Activated CD4-positive, alpha-beta T cell treated with anti-CD3 and anti-CD28 coated beads for 36 hours (primary cell): ENCODE measurements at regions of chr6 and their contacts with region 1.

Region 1: GRCh38 chr6:28252009-28252975 is at the start of gene ZKSCAN4:
- DNase-seq: peak; percentile 85
- ATAC-seq: peak; percentile 83
- H3K4me3 Mint-ChIP-seq: peak within 1 kb of the TSS; percentile 99
- H3K27ac Mint-ChIP-seq: peak within 1 kb of the TSS; percentile 96
- H3K4me1 Mint-ChIP-seq: peaks cover 14% of the 10 kb centered on the region
- H3K27me3 Mint-ChIP-seq: peaks cover 1% of the 10 kb centered on the region
- total RNA-seq, gene ZKSCAN4: 3.2 to 4.1 TPM

Region 2: DNA sequence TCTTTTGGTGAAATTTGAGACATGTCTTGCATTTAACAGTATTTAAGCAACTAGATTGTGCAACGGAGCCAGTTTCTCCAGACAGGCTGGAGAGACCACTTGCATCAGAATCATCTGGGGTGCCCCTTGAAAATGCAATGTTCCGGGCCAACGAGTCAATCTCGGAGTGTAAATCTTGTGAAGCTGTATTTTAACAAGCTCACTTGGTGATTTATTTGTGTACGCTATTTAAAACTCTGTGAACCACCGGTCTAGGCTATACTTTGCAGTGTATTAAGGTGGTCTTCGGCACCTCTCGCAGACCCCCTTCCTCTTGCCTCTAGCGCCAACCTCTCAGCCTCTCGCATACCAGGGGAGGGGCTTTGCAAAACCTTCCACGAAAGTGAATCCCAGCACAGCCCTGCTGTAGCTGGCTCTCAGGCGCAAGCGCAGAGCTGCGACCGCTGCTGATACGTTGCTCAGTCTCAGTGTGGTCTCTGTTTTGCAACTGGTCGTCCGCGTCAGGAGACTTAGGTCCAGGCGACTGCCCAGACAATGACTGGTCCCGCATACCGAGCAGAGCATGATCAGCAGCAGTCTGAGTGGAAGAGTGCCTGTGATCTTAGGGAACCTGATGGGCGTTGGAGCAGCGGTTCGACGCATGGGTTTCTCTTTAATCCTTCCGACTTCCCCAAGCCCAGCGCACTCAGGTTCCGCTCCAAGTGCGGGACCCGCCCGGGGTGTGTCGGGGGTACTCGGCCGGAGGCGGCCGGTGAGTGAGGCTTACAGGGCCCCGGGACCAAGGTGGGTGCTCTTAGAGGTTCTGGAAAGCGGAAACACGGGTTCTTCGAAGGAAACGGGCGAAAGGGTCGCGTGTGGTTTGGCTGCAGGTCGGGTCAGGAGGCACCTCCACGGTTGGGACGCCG is 863.7 kb before region 1 on chr6 and contains the start of gene ZNF391:
- CTCF ChIA-PET with region 1: no interaction called
- POLR2A ChIA-PET with region 1: no interaction called
- intact Hi-C with region 1: loop called in 1 of 2 experiments (anchors 10 kb)
- DNase-seq: peak; percentile 81
- ATAC-seq: peak; percentile 95
- H3K4me3 Mint-ChIP-seq: peak within 1 kb of the TSS; percentile 95
- H3K27ac Mint-ChIP-seq: peak within 1 kb of the TSS; percentile 93
- H3K4me1 Mint-ChIP-seq: peaks cover 14% of the 10 kb centered on the region
- H3K27me3 Mint-ChIP-seq: peaks cover 6% of the 10 kb centered on the region
- total RNA-seq, gene ZNF391: 4.3 to 6.2 TPM

Region 3: DNA sequence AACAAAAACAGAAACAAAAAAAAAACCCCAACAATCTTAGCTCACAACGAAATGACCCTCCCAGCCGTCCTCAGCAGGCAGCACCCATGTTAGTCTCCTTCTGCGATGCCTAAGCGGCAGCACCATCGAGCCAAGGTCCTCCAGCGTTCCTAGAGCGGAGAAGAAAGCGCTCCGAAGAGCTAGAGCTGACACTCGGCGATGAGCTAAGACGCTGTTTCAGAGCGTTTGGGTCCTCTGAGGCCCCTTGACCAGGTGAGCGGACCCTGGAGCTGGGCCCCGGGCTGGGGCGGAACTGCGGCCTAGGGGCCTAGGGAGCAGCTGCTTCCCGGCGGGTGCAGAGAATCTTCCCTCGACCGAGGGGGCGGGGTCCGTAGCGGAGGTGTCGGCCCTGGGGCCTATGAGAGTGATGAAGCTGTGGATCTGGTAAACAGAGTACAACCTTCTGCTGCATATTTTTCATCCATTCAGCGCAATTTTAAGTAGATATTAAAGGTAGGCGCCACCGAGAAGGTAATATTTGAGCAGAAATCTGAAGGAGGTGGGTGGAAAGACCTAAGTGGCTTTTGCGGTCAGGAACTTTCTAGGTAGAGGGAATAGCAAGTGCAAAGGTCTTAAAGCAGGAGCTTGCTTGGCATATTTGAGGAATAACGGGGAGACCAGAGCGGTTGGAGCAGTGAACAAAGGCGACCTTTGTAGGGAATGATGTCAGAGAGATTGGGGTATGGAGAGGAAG is 14.8 kb after region 1 on chr6 and contains the start of gene ZSCAN26:
- CTCF ChIA-PET with region 1: interaction called, 12 read pairs
- POLR2A ChIA-PET with region 1: interaction called, 19 read pairs
- intact Hi-C with region 1: loop called (anchors 1 kb)
- DNase-seq: peak; percentile 91
- ATAC-seq: peak; percentile 90
- H3K4me3 Mint-ChIP-seq: no peak within 1 kb of the TSS
- H3K27ac Mint-ChIP-seq: no peak within 1 kb of the TSS
- H3K4me1 Mint-ChIP-seq: peaks cover 32% of the 10 kb centered on the region
- H3K27me3 Mint-ChIP-seq: no peaks in the 10 kb centered on the region
- total RNA-seq, gene ZSCAN26: 5.0 to 6.7 TPM

Region 4: GRCh38 chr6:28281288-28282064 is 29.2 kb after region 1 on chr6 and contains the start of gene PGBD1:
- CTCF ChIA-PET with region 1: no interaction called
- POLR2A ChIA-PET with region 1: no interaction called
- intact Hi-C with region 1: loop called in 1 of 2 experiments (anchors 1 kb)
- DNase-seq: peak; percentile 74
- ATAC-seq: peak; percentile 87
- H3K4me3 Mint-ChIP-seq: peak within 1 kb of the TSS; percentile 76
- H3K27ac Mint-ChIP-seq: no peak within 1 kb of the TSS
- H3K4me1 Mint-ChIP-seq: peaks cover 9% of the 10 kb centered on the region
- H3K27me3 Mint-ChIP-seq: peaks cover 18% of the 10 kb centered on the region
- total RNA-seq, gene PGBD1: 1.5 to 1.6 TPM

Region 5: DNA sequence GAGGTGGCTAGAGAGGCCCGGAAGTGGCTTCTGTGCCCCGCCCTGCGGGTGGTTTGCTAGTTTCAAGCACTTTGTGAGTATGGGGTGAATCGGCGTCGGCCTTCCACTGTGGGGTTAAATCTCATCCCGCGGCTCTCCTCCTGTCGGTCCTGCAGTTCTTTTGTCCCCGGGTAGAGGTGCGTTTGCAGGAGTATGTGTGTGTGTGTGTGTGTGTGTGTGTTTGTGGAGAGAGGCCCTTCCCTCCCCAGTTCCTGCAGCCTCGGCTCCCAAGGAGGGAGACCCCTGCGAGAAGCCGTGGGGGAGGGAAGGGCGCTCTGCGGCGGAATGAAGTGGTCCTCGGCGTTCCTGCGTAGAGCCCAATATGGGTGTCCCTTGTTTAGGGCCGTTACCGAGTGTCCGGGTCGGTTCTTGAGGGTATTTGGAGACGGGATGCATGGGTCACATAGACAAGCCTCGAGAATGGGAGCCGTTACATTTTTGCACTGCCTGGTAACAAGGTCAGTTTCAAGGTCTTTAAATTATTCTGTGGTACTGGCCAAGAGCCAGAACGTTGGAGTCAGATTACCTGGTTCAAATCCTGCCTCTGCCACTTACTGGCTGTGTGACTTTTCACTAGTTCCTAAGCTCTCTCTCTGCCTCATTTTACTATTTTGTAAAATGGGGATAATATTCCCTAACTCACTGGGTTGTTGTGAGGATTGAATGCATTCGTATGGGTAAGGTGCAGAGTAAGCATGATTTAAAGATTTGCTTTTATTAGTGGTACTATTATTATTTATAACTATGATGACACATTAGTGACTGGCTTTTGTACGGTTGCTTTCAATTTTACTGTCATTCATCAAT is 97.8 kb after region 1 on chr6 and contains the start of gene ZKSCAN3:
- CTCF ChIA-PET with region 1: no interaction called
- POLR2A ChIA-PET with region 1: no interaction called
- intact Hi-C with region 1: loop called (anchors 2 to 5 kb)
- DNase-seq: peak; percentile 94
- ATAC-seq: peak; percentile 100
- H3K4me3 Mint-ChIP-seq: peak within 1 kb of the TSS; percentile 96
- H3K27ac Mint-ChIP-seq: peak within 1 kb of the TSS; percentile 93
- H3K4me1 Mint-ChIP-seq: peaks cover 22% of the 10 kb centered on the region
- H3K27me3 Mint-ChIP-seq: peaks cover 7% of the 10 kb centered on the region
- total RNA-seq, gene ZKSCAN3: 2.2 to 3.1 TPM